CD4-positive, alpha-beta memory T cell (primary cell): ENCODE measurements at regions of chr3 and their contacts with region 1.

Region 1: DNA sequence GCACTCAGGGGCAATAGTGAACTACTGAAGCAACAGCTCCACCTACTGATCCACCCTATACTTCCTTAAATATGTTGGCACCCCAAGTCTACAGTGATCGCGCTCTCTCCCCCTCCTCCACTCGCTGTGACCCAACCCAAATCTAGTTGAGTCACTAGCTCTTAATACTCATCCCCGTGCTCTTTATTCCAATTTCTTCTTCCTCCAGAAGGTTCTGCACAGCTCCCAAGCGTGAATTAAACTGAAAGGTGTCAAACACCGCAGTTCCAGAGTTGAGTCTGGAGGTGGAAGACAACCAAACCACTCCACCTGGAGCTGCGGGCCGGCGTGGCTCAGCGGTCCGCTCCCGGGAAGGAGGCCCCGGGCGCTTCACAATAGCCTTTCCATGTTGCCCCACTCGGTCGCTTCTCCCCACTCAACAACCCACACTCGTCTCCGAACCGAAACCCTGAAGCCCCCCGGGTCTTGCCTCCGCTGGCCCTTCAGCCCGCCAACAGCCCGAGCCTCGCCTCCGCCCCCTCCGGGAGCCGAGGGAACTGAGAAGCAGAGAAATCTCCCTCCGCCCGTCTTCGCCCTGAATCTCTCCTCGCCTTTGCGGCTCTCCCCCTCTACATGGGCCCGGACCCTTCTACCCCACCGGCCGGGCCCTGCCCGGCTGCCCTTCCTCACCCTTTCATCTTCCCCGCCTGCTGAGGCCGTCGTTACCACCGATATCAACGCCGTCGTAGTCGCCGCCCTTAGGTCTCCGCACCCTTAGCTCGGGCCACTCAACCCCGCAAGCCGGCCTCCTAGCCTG is 578 bp downstream of the NAA50 start:
- DNase-seq: peak; percentile 82 to 92 (median 84)
- H3K4me3 ChIP-seq: peak overlapping the region; percentile 87 to 96
- H3K4me3 Mint-ChIP-seq: peak overlapping the region; percentile 92 to 100 (median 98)
- H3K27ac ChIP-seq: peak overlapping the region; percentile 99
- H3K27ac Mint-ChIP-seq: peak overlapping the region; percentile 100
- H3K4me1 ChIP-seq: peaks cover 73% of the 10 kb centered on the region
- H3K4me1 Mint-ChIP-seq: peaks cover 49 to 90% (median 62%) of the 10 kb centered on the region in 4 donors
- H3K27me3 ChIP-seq: no peaks in the 10 kb centered on the region
- H3K27me3 Mint-ChIP-seq: no peaks in the 10 kb centered on the region

Region 2: DNA sequence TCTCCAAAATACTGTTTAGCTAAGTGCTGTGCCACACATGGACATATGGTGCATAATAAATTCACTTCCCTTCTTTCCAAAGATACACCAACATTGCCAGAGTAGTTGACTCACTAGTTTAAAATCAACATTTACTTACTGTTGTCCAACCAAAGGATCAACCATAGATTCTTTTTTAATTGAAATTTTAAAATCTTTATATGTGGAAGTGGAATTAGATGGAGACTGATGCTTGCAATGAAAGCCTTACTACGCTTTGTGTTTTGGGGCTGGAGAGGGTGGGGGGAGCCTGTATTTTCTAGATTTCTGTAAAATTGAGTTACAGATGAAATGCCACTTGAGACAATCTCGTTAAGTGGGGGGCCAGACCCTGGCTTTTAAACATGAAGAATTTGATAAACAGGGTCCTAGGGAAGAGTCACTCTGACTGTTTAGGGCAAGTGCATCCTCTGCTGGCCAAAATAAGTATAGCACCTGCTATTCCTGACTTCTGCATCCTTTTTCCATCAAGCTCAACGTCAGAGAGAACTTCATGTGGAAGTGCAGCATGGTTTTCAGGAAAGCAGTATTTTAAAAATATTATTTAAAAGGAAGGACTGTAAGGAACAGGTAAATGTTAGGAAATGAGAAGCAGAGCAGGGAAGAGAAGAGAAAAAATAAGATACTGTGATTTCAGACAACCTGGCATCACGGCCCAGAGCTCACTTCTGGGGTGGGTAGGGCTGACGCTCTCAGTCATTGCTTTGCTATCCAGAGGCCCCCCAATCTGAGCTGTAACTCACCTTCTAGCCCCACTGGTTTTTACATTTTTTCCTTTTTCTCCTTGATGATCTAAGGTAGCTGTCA is 457.4 kb before region 1 on chr3:
- CTCF ChIA-PET with region 1: interaction called, 3 read pairs
- POLR2A ChIA-PET with region 1: no interaction called
- intact Hi-C with region 1: loop called (anchors 10 kb)
- DNase-seq: peak in 4 of 5 donors; percentile 25 to 49 (median 36)
- H3K4me3 ChIP-seq: no peak overlapping the region
- H3K4me3 Mint-ChIP-seq: no peak overlapping the region
- H3K27ac ChIP-seq: no peak overlapping the region
- H3K27ac Mint-ChIP-seq: no peak overlapping the region
- H3K4me1 ChIP-seq: no peaks in the 10 kb centered on the region
- H3K4me1 Mint-ChIP-seq: no peaks in the 10 kb centered on the region
- H3K27me3 ChIP-seq: no peaks in the 10 kb centered on the region
- H3K27me3 Mint-ChIP-seq: no peaks in the 10 kb centered on the region

Region 3: GRCh38 chr3:113575206-113575605 is 170.3 kb before region 1 on chr3:
- CTCF ChIA-PET with region 1: interaction called, 31 read pairs
- POLR2A ChIA-PET with region 1: interaction called, 3 read pairs
- intact Hi-C with region 1: loop called (anchors 1 kb)
- DNase-seq: no peak
- H3K4me3 ChIP-seq: no peak overlapping the region
- H3K4me3 Mint-ChIP-seq: no peak overlapping the region
- H3K27ac ChIP-seq: no peak overlapping the region
- H3K27ac Mint-ChIP-seq: peak overlapping the region in 4 of 7 donors; percentile 49 to 86 (median 74)
- H3K4me1 ChIP-seq: no peaks in the 10 kb centered on the region
- H3K4me1 Mint-ChIP-seq: peaks cover 7 to 10% (median 8%) of the 10 kb centered on the region in 4 donors
- H3K27me3 ChIP-seq: no peaks in the 10 kb centered on the region
- H3K27me3 Mint-ChIP-seq: no peaks in the 10 kb centered on the region

Region 4: GRCh38 chr3:113764698-113765097 is 19.2 kb after region 1 on chr3:
- CTCF ChIA-PET with region 1: interaction called, 4 read pairs
- POLR2A ChIA-PET with region 1: interaction called, 11 read pairs
- intact Hi-C with region 1: no loop called
- DNase-seq: no peak
- H3K4me3 ChIP-seq: no peak overlapping the region
- H3K4me3 Mint-ChIP-seq: no peak overlapping the region
- H3K27ac ChIP-seq: no peak overlapping the region
- H3K27ac Mint-ChIP-seq: no peak overlapping the region
- H3K4me1 ChIP-seq: no peaks in the 10 kb centered on the region
- H3K4me1 Mint-ChIP-seq: peaks cover 0 to 3% (median under 1%) of the 10 kb centered on the region in 4 donors
- H3K27me3 ChIP-seq: no peaks in the 10 kb centered on the region
- H3K27me3 Mint-ChIP-seq: no peaks in the 10 kb centered on the region

Region 5: GRCh38 chr3:114056130-114057010 is 310.9 kb after region 1 on chr3 and contains the starts of genes CCDC191 and QTRT2:
- CTCF ChIA-PET with region 1: interaction called, 10 read pairs
- POLR2A ChIA-PET with region 1: interaction called, 12 read pairs
- intact Hi-C with region 1: loop called (anchors 1 kb)
- DNase-seq: peak; percentile 97 to 99 (median 98)
- H3K4me3 ChIP-seq: peak within 1 kb of the TSS; percentile 78 to 93
- H3K4me3 Mint-ChIP-seq: peak within 1 kb of the TSS; percentile 95 to 100 (median 99)
- H3K27ac ChIP-seq: peak within 1 kb of the TSS; percentile 86
- H3K27ac Mint-ChIP-seq: peak within 1 kb of the TSS; percentile 93 to 100 (median 99)
- H3K4me1 ChIP-seq: peaks cover 26% of the 10 kb centered on the region
- H3K4me1 Mint-ChIP-seq: peaks cover 21 to 57% (median 38%) of the 10 kb centered on the region in 4 donors
- H3K27me3 ChIP-seq: no peaks in the 10 kb centered on the region
- H3K27me3 Mint-ChIP-seq: peaks cover 0 to 2% of the 10 kb centered on the region in 2 donors
- total RNA-seq, gene CCDC191: 5.7 to 7.1 TPM
- total RNA-seq, gene QTRT2: 29.4 to 35.7 TPM